ENCODE measurements at regions of chr21 and their contacts with region 1.

Region 1: GRCh38 chr21:38733973-38734546 is 71.7 kb upstream of the ETS2 start:
- DNase-seq: peak; percentile 31 to 53 (median 51)
- H3K4me3 ChIP-seq: peak overlapping the region; percentile 51 to 87 (median 79)
- H3K27ac ChIP-seq: peak overlapping the region; percentile 43 to 63
- H3K4me1 ChIP-seq: peaks cover 14 to 32% (median 21%) of the 10 kb centered on the region in 4 experiments
- H3K27me3 ChIP-seq: no peaks in the 10 kb centered on the region

Region 2: DNA sequence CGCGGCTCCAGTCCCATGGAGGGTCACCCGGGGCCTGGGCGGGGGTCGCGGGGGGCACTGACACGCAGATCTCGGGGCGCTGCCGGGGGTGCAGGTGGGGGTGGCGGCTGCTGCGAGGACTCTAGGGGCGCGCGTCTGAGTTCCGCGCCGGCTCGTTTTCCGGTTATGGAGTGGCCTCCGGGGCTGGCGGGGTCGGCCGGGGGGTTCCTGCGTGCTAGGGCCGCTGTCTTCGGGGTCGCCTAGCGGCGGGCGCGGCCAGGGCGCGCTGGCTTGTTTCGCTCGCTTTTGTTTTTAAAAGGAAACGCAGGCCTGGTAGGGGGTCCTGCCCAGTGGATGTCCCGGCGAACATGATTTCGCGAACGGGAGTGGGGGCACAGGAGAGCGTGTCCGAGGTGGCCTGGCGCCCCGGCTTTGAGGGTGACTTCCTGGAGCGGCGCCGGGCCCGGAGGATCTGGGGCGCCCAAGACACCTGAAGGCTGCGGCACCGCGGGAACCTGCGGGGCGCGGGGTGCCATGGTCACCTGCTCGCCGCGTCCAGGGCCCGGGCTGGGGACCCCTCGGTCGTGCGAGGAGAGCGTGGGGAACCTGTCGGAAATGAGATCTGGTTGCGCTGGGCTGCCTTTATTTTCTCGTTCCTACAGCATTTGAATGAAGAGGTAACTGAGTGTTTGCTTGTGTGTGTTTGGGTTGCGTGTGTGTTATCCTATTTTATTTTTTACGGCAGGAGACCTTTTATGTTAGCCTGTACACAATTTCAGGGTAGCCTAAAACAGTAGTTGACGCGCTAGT is 72.3 kb after region 1 on chr21:
- CTCF ChIA-PET with region 1: interaction called, 11 read pairs
- POLR2A ChIA-PET with region 1: interaction called, 4 read pairs
- DNase-seq: peak in 2 of 3 donors; percentile 62 to 79
- H3K4me3 ChIP-seq: peak overlapping the region; percentile 87 to 99 (median 95)
- H3K27ac ChIP-seq: peak overlapping the region; percentile 91 to 93
- H3K4me1 ChIP-seq: peaks cover 20 to 67% (median 58%) of the 10 kb centered on the region in 4 experiments
- H3K27me3 ChIP-seq: no peaks in the 10 kb centered on the region

Region 3: GRCh38 chr21:39121600-39122355 is 387.7 kb after region 1 on chr21:
- CTCF ChIA-PET with region 1: interaction called, 10 read pairs
- POLR2A ChIA-PET with region 1: no interaction called
- DNase-seq: peak in 2 of 3 donors; percentile 64 to 69
- H3K4me3 ChIP-seq: no peak overlapping the region
- H3K27ac ChIP-seq: no peak overlapping the region
- H3K4me1 ChIP-seq: peaks cover 0 to 30% (median 10%) of the 10 kb centered on the region in 4 experiments
- H3K27me3 ChIP-seq: no peaks in the 10 kb centered on the region

Region 4: DNA sequence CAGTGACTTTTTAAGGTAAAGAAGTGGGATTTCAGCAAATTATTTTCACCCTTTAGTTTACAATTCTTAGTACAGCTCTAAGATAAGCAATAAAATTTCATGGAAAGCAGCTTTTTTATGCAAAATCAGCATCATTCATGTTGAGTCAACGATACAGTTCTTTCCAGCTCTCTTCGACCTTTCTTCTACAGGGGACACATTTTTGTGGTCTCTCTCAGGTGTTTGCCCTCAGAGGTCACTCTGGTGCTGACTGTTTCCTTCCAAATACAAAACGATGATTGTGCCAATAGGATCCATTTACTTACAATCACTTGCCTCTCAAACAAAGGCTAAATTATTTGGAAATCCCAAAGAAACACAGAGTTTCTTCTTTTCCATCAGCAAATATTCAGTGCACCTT is 398.2 kb after region 1 on chr21:
- CTCF ChIA-PET with region 1: interaction called, 19 read pairs
- POLR2A ChIA-PET with region 1: no interaction called
- DNase-seq: no peak
- H3K4me3 ChIP-seq: no peak overlapping the region
- H3K27ac ChIP-seq: no peak overlapping the region
- H3K4me1 ChIP-seq: peaks cover 0 to 23% (median 5%) of the 10 kb centered on the region in 4 experiments
- H3K27me3 ChIP-seq: no peaks in the 10 kb centered on the region

Measured in common myeloid progenitor, CD34-positive (primary cell).